ENCODE measurements at regions of chr3 and their contacts with region 1.

Region 1: DNA sequence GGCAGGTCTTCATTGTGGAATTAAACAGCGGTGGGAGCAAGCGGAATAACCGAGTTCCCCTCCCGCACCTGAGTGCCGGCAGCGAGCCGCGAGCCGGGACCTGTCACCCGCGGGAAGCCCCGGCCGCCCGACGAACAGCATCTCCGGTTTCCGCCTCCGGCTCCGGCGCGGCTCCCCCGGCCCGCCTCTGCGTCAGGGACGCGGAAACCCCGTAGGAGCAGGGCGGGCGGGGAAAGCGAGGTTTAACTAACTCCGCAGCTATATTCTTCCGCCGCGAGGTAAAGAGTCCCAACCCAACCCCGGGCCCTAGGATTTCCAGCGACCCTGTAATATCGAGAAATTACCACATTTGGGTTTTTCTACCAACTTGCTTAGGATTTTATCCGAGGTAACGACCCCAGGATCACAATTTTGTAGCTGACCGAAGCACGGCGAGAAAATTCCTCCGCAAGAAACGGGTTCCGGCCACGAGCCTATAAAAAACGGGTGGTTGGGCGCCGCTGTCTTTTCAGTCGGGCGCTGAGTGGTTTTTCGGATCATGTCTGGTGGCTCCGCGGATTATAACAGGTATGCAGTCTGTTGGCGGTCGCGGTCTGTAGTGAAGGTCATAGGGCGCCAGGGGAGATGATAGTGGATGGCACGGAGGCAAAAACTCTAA is at the start of gene EIF4A2:
- DNase-seq: peak; percentile 88
- H3K4me3 Mint-ChIP-seq: peak within 1 kb of the TSS; percentile 93
- H3K27ac Mint-ChIP-seq: peak within 1 kb of the TSS; percentile 99
- H3K4me1 Mint-ChIP-seq: peaks cover 21% of the 10 kb centered on the region
- H3K27me3 Mint-ChIP-seq: no peaks in the 10 kb centered on the region
- CTCF ChIP-seq: no peak
- total RNA-seq, gene EIF4A2: 183 and 202 TPM in 2 replicates

Region 2: GRCh38 chr3:185937689-185938463 is 845.3 kb before region 1 on chr3 and contains the start of gene TRA2B:
- CTCF ChIA-PET with region 1: no interaction called
- POLR2A ChIA-PET with region 1: interaction called, 24 read pairs
- intact Hi-C with region 1: no loop called
- DNase-seq: peak; percentile 99
- H3K4me3 Mint-ChIP-seq: peak within 1 kb of the TSS; percentile 98
- H3K27ac Mint-ChIP-seq: peak within 1 kb of the TSS; percentile 100
- H3K4me1 Mint-ChIP-seq: peaks cover 17% of the 10 kb centered on the region
- H3K27me3 Mint-ChIP-seq: no peaks in the 10 kb centered on the region
- CTCF ChIP-seq: no peak
- total RNA-seq, gene TRA2B: 212 and 246 TPM in 2 replicates

Region 3: GRCh38 chr3:186589121-186589520 is 194.1 kb before region 1 on chr3:
- CTCF ChIA-PET with region 1: no interaction called
- POLR2A ChIA-PET with region 1: interaction called, 42 read pairs
- intact Hi-C with region 1: no loop called
- DNase-seq: peak; percentile 73
- H3K4me3 Mint-ChIP-seq: peak overlapping the region; percentile 47
- H3K27ac Mint-ChIP-seq: peak overlapping the region; percentile 86
- H3K4me1 Mint-ChIP-seq: peaks cover 25% of the 10 kb centered on the region
- H3K27me3 Mint-ChIP-seq: no peaks in the 10 kb centered on the region
- CTCF ChIP-seq: peak; percentile 33

Region 4: DNA sequence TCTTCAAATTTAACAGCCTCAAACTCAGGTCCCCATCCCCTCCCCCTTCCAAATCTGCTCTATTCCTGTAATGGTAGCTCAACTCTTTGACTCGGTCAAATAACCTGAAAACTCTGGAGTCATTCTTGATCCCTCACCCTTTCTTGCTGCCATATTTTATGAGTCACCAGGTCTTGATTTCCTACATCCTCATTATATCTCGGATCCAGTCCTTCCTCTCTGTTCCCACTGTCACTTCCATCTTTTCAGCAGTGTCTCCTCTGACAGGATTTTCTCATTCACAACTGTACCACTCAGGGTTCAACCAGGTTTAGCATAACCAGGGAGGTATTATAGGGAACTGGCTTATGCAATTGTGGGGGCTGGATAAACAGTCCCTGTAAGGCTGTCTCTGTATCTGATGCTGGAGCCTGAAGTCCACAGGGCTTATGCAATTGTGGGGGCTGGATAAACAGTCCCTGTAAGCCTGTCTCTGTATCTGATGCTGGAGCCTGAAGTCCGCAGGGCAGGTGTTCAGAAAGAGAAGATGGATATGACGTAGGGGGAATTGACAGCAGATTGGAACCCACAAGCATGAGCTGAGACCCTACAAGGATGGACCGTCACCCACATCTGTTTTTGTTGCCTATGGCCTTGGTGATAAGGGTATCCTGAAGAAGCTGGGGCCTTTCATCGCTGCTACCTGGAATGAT is 152.1 kb before region 1 on chr3:
- CTCF ChIA-PET with region 1: interaction called, 3 read pairs
- POLR2A ChIA-PET with region 1: interaction called, 11 read pairs
- intact Hi-C with region 1: no loop called
- DNase-seq: no peak
- H3K4me3 Mint-ChIP-seq: no peak overlapping the region
- H3K27ac Mint-ChIP-seq: no peak overlapping the region
- H3K4me1 Mint-ChIP-seq: no peaks in the 10 kb centered on the region
- H3K27me3 Mint-ChIP-seq: no peaks in the 10 kb centered on the region
- CTCF ChIP-seq: no peak

Region 5: DNA sequence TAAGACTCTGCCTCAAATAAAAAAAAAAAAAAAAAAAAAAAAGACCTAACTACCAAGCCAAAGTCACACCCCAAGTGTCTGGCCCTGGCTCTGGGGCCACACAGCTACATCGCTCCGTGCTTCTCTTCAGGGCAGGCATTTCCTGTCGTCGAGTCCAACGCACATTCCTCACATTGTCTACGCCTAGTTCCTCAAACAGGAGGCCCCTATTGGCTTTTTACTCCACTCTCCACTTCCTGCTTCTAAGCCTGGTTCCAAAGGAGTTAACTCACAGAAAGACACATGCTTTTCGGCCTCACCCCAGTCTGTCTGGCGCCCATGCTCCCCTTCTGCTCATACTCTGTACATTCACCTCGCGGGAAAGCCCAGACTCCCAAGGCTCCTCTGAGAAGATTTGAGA is 37.2 kb before region 1 on chr3:
- CTCF ChIA-PET with region 1: no interaction called
- POLR2A ChIA-PET with region 1: interaction called, 82 read pairs
- intact Hi-C with region 1: no loop called
- DNase-seq: peak; percentile 85
- H3K4me3 Mint-ChIP-seq: peak overlapping the region; percentile 6
- H3K27ac Mint-ChIP-seq: peak overlapping the region; percentile 89
- H3K4me1 Mint-ChIP-seq: peaks cover 7% of the 10 kb centered on the region
- H3K27me3 Mint-ChIP-seq: no peaks in the 10 kb centered on the region
- CTCF ChIP-seq: no peak

Region 6: GRCh38 chr3:186772701-186773424 is 10.3 kb before region 1 on chr3:
- CTCF ChIA-PET with region 1: no interaction called
- POLR2A ChIA-PET with region 1: interaction called, 24 read pairs
- intact Hi-C with region 1: no loop called
- DNase-seq: no peak
- H3K4me3 Mint-ChIP-seq: no peak overlapping the region
- H3K27ac Mint-ChIP-seq: no peak overlapping the region
- H3K4me1 Mint-ChIP-seq: no peaks in the 10 kb centered on the region
- H3K27me3 Mint-ChIP-seq: no peaks in the 10 kb centered on the region
- CTCF ChIP-seq: no peak

Region 7: GRCh38 chr3:186821429-186822367 is 38.5 kb after region 1 on chr3:
- CTCF ChIA-PET with region 1: interaction called, 9 read pairs
- POLR2A ChIA-PET with region 1: interaction called, 14 read pairs
- intact Hi-C with region 1: loop called (anchors 1 kb)
- DNase-seq: peak; percentile 78
- H3K4me3 Mint-ChIP-seq: no peak overlapping the region
- H3K27ac Mint-ChIP-seq: no peak overlapping the region
- H3K4me1 Mint-ChIP-seq: peaks cover 19% of the 10 kb centered on the region
- H3K27me3 Mint-ChIP-seq: no peaks in the 10 kb centered on the region
- CTCF ChIP-seq: peak; percentile 66